ENCODE measurements at regions of chr2 and their contacts with region 1.

Region 1: GRCh38 chr2:96116879-96117697 is 717 bp upstream of the ADRA2B start:
- DNase-seq: peak; percentile 64
- ATAC-seq: peak; percentile 82
- H3K4me3 Mint-ChIP-seq: peak overlapping the region; percentile 64
- H3K27ac Mint-ChIP-seq: no peak overlapping the region
- H3K4me1 Mint-ChIP-seq: peaks cover 22% of the 10 kb centered on the region
- H3K27me3 Mint-ChIP-seq: peaks cover 32% of the 10 kb centered on the region
- CTCF ChIP-seq: peak; percentile 92

Region 2: DNA sequence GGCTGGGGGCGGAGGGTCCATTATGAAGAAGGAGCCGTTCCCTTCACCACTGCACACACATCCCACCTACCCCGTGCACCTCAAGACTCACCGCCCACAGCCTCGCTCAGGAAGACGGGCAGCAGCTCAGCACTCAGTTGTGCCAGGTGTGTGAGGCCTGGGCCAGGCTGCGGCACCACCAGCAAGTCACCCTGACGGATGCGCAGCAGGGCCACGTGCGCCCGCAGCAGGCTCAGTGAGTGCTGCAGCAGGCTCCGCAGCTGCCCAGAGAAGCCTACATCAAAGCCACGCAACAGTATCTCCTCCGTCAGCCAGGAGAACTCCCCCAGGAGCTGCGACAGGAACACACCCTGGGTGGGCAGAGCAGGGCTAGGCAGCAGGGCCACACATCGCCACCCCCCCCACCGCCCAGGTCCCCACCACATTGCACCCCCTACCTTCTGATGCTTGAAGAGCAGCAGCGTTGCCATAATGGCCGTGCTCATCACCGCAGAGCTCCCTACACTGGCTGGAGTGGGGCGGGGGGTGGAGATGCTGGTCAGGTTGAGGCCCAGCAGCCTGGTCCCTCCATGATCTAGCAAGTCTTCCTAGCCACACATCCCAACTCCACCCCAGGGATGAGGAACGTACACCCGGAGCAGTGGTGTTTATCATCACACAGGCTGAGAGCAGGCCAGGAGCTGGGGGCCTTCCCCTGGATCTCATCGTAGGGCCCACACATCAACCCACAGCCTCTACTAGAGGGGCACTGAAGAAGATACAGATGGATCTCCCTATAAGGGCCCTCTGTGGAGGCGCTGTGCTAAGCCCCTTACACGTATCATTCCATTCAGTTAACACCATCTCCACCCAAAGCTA is 92.5 kb before region 1 on chr2:
- CTCF ChIA-PET with region 1: interaction called, 15 read pairs
- POLR2A ChIA-PET with region 1: interaction called, 4 read pairs
- intact Hi-C with region 1: no loop called
- DNase-seq: no peak
- ATAC-seq: no peak
- H3K4me3 Mint-ChIP-seq: no peak overlapping the region
- H3K27ac Mint-ChIP-seq: no peak overlapping the region
- H3K4me1 Mint-ChIP-seq: peaks cover 4% of the 10 kb centered on the region
- H3K27me3 Mint-ChIP-seq: no peaks in the 10 kb centered on the region
- CTCF ChIP-seq: no peak

Region 3: DNA sequence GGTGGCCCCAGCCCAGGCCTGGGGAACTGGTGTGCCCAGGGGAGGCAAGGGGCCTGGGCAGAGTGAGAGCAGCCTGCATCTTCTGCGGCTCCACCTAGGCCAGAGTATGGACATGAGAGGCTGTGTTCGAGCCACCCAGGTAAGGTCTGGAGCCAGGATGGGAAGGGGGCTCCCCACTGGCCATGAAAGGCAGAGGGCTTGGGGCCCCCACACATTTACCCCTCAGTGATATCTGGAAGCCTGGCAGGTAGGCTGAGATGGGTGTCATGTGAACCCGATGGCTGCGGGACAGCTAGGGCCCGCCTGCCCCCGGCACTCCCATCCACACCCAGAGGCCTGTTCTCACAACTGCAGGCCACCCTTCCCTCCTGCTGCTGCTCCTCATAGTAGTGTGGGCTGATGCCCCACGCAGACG is 13.9 kb before region 1 on chr2:
- CTCF ChIA-PET with region 1: interaction called, 10 read pairs
- POLR2A ChIA-PET with region 1: interaction called, 6 read pairs
- intact Hi-C with region 1: no loop called
- DNase-seq: no peak
- ATAC-seq: no peak
- H3K4me3 Mint-ChIP-seq: no peak overlapping the region
- H3K27ac Mint-ChIP-seq: no peak overlapping the region
- H3K4me1 Mint-ChIP-seq: no peaks in the 10 kb centered on the region
- H3K27me3 Mint-ChIP-seq: no peaks in the 10 kb centered on the region
- CTCF ChIP-seq: no peak

Region 4: GRCh38 chr2:96138179-96139145 is 21.4 kb after region 1 on chr2 and contains the start of gene ASTL:
- CTCF ChIA-PET with region 1: interaction called, 39 read pairs
- POLR2A ChIA-PET with region 1: interaction called, 11 read pairs
- intact Hi-C with region 1: no loop called
- DNase-seq: peak; percentile 80
- ATAC-seq: peak; percentile 48
- H3K4me3 Mint-ChIP-seq: peak within 1 kb of the TSS; percentile 7
- H3K27ac Mint-ChIP-seq: peak within 1 kb of the TSS; percentile 55
- H3K4me1 Mint-ChIP-seq: peaks cover 29% of the 10 kb centered on the region
- H3K27me3 Mint-ChIP-seq: no peaks in the 10 kb centered on the region
- CTCF ChIP-seq: peak; percentile 71
- total RNA-seq, gene ASTL: 1.8 to 2.7 TPM

Region 5: GRCh38 chr2:96180521-96180920 is 63.4 kb after region 1 on chr2:
- CTCF ChIA-PET with region 1: interaction called, 94 read pairs
- POLR2A ChIA-PET with region 1: no interaction called
- intact Hi-C with region 1: no loop called
- DNase-seq: no peak
- ATAC-seq: peak; percentile 45
- H3K4me3 Mint-ChIP-seq: no peak overlapping the region
- H3K27ac Mint-ChIP-seq: no peak overlapping the region
- H3K4me1 Mint-ChIP-seq: peaks cover 12% of the 10 kb centered on the region
- H3K27me3 Mint-ChIP-seq: no peaks in the 10 kb centered on the region
- CTCF ChIP-seq: no peak

Region 6: GRCh38 chr2:96260404-96261260 is 143.5 kb after region 1 on chr2:
- CTCF ChIA-PET with region 1: interaction called, 12 read pairs
- POLR2A ChIA-PET with region 1: no interaction called
- intact Hi-C with region 1: no loop called
- DNase-seq: peak; percentile 61
- ATAC-seq: peak; percentile 66
- H3K4me3 Mint-ChIP-seq: no peak overlapping the region
- H3K27ac Mint-ChIP-seq: peak overlapping the region; percentile 81
- H3K4me1 Mint-ChIP-seq: peaks cover 69% of the 10 kb centered on the region
- H3K27me3 Mint-ChIP-seq: no peaks in the 10 kb centered on the region
- CTCF ChIP-seq: no peak

Measured in activated CD8-positive, alpha-beta T cell treated with anti-CD3 and anti-CD28 coated beads for 36 hours (primary cell).